ENCODE measurements at regions of chr12 and their contacts with region 1.

Region 1: GRCh38 chr12:130916251-130916911 is 37.3 kb upstream of the ADGRD1 start:
- DNase-seq: peak; percentile 49 to 53
- ATAC-seq: peak; percentile 80 to 92 (median 86)
- H3K4me3 ChIP-seq: peak overlapping the region in 5 of 10 donors; percentile 9 to 42 (median 29)
- H3K27ac ChIP-seq: no peak overlapping the region
- H3K4me1 ChIP-seq: peaks cover 0 to 5% (median 0%) of the 10 kb centered on the region in 9 donors
- H3K27me3 ChIP-seq: peaks cover 0 to 26% (median 12%) of the 10 kb centered on the region in 7 donors
- CTCF ChIP-seq: peak; percentile 84 to 99 (median 92)

Region 2: GRCh38 chr12:131104463-131105350 is 188.3 kb after region 1 on chr12:
- intact Hi-C with region 1: loop called in 1 of 10 experiments (anchors 10 kb)
- DNase-seq: peak; percentile 87 to 90
- ATAC-seq: peak; percentile 84 to 96 (median 92)
- H3K4me3 ChIP-seq: no peak overlapping the region
- H3K27ac ChIP-seq: peak overlapping the region in 3 of 10 donors; percentile 11 to 48 (median 12)
- H3K4me1 ChIP-seq: peaks cover 0 to 17% (median 12%) of the 10 kb centered on the region in 9 donors
- H3K27me3 ChIP-seq: no peaks in the 10 kb centered on the region
- CTCF ChIP-seq: peak; percentile 74 to 96 (median 93)

Region 3: DNA sequence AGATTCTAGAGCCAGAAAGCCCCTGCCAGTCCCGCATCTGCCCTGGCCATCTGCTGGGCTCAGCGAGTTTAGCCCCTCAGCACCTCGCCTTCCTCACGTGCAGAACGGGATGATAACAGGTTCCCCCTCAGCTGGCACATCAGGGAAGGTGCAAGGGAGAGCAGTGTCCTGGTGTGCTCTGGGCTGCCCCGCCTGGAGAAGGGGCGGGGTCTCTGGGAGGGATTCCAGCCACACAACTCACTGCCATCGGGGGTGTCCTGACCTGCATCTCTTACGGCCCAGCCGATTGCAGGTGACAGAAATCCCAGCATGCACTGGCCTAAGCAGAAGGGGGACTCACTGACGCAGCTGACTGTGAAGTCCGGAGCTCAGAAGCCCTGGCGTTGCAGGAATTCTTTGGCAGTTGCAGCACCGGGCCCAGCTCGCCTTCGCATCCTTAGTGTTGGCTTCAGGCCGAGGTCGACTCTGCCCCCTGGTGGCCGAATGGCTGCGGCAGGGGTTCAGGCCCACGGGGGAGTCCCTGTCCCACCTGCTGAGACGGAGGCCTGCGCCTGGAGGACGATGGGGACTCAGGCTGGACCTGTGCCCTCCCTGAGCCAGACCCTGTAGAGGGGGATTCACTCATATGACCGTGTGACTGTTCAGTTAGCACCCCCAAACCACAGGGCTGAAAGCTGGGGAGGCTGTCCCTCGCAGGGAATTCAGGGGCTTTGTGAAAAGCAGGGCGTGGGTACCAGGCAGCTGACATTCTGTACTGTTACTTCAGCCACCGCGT is 215.9 kb after region 1 on chr12:
- intact Hi-C with region 1: loop called (anchors 1 to 10 kb)
- DNase-seq: peak; percentile 69 to 76
- ATAC-seq: peak; percentile 46 to 90 (median 78)
- H3K4me3 ChIP-seq: no peak overlapping the region
- H3K27ac ChIP-seq: peak overlapping the region in 3 of 10 donors; percentile 14 to 19 (median 15)
- H3K4me1 ChIP-seq: peaks cover 7 to 18% (median 12%) of the 10 kb centered on the region in 9 donors
- H3K27me3 ChIP-seq: no peaks in the 10 kb centered on the region
- CTCF ChIP-seq: peak; percentile 61 to 90 (median 83)

Region 4: GRCh38 chr12:131454418-131455217 is 538.2 kb after region 1 on chr12:
- intact Hi-C with region 1: loop called in 2 of 10 experiments (anchors 10 kb)
- DNase-seq: peak; percentile 32 to 37
- ATAC-seq: peak in 7 of 8 donors; percentile 67 to 88 (median 79)
- H3K4me3 ChIP-seq: no peak overlapping the region
- H3K27ac ChIP-seq: no peak overlapping the region
- H3K4me1 ChIP-seq: no peaks in the 10 kb centered on the region
- H3K27me3 ChIP-seq: peaks cover 0 to 46% (median 24%) of the 10 kb centered on the region in 7 donors
- CTCF ChIP-seq: peak; percentile 8 to 72 (median 56)

Region 5: DNA sequence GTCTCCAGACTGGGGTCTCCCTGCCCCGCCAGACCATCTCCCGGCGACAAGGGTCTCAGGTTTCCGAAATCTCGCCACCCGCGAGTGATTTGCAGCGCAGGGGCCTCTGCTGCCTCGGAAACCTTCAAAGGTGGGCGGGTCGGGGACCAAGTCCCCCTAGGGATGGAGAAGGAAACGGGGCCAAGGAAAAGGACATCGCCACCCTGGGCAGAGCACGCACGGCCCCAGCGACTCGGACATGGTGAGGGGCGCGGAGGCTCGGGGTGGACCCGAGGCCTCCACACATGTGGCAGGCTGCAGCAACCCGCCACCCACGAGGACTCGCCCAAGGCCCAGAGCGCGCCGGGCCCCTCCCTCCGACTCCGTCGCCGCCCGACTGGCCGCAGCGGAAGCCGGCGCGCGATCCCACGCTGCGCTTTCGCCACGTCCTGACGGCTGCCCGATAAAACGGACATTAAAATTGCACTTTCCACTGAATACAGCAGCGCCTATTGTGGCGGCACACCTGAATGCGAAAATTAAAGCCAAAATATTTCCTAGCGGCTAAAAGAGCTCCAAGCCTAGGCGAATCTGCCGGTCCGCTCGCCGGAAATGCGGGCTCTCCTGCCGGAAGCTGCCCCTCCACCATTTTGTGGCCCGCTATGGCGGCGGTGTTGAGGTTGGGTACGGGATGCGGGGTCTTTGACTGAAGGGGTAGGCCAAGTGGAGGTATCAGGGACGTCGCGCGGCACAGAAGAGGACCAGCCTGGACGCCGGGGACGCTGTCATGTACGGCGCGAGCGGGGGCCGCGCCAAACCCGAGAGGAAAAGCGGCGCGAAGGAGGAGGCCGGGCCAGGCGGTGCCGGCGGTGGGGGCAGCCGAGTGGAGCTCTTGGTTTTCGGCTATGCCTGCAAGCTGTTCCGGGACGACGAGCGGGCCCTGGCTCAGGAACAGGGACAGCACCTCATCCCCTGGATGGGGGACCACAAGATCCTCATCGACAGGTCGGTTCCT is 794.4 kb after region 1 on chr12 and contains the start of gene SFSWAP:
- intact Hi-C with region 1: loop called in 1 of 10 experiments (anchors 5 kb)
- DNase-seq: peak; percentile 74 to 76
- ATAC-seq: peak; percentile 96 to 98 (median 97)
- H3K4me3 ChIP-seq: peak within 1 kb of the TSS; percentile 57 to 100 (median 91)
- H3K27ac ChIP-seq: peak within 1 kb of the TSS; percentile 87 to 100 (median 96)
- H3K4me1 ChIP-seq: peaks cover 2 to 30% (median 23%) of the 10 kb centered on the region in 9 donors
- H3K27me3 ChIP-seq: no peaks in the 10 kb centered on the region
- CTCF ChIP-seq: no peak
- total RNA-seq, gene SFSWAP: 14.8 to 26.8 (median 19.6) TPM